ENCODE measurements at regions of chr12 and their contacts with region 1.

Region 1: DNA sequence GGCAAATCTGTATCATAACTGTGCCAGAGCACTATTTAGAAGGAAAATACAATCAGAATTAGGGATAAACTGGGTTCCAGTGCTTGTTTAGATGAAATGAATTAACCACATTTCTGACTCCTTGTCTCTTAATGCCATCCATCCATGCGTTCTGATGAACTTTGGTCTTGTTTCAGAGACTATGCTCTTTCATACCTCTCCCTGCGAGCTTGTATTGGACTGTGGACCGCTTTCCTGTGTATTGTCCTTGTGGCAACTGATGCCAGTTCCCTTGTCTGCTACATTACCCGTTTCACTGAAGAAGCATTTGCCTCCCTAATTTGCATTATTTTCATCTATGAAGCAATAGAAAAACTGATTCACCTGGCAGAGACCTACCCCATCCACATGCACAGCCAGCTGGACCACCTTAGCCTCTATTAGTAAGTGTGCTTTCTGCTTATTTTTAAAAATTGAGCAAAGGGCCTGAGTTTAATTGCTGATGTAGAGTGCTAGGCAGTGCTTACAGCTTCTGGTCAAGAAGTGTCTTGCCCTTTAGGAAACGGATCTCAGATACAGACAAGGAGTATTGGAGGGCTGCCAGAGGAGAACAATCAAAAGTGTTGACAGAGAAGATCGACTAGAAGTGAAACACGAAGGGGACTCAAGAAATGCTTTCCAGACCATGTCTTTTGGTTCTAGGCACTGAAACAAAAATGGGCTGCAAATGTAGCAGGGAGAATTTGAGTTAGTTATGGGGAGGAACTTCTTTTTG is 46.7 kb downstream of the SLC4A8 start:
- DNase-seq: no peak
- H3K4me3 ChIP-seq: no peak overlapping the region
- H3K27ac ChIP-seq: no peak overlapping the region
- H3K4me1 ChIP-seq: no peaks in the 10 kb centered on the region
- H3K27me3 ChIP-seq: peaks cover 7% of the 10 kb centered on the region
- CTCF ChIP-seq: no peak

Region 2: DNA sequence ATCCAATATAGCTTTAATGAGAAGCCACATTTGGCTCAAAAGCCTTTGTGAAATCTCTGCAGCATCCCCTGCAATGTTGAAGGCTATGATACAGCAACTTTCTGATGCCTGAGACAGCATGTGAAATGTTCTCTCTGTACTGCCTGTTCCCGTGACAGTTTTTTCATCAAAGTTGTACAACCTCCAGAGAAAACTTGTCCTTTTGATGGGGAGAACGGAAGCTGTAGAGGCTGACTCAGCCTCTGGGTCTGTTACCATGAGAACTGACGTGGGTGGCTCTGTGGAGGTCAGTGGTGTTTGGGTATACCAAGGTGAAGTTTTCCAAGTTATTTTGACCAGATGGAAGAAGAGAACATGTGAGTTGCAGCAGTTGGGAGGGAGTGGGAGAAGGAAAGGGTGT is 29.7 kb before region 1 on chr12:
- CTCF ChIA-PET with region 1: no interaction called
- dilution Hi-C with region 1: no loop called
- in situ Hi-C with region 1: no loop called
- intact Hi-C with region 1: no loop called
- DNase-seq: peak; percentile 47
- H3K4me3 ChIP-seq: no peak overlapping the region
- H3K27ac ChIP-seq: no peak overlapping the region
- H3K4me1 ChIP-seq: peaks cover 10% of the 10 kb centered on the region
- H3K27me3 ChIP-seq: peaks cover 3% of the 10 kb centered on the region
- CTCF ChIP-seq: no peak

Region 3: GRCh38 chr12:51496895-51497294 is 25.6 kb after region 1 on chr12:
- CTCF ChIA-PET with region 1: no interaction called
- dilution Hi-C with region 1: no loop called
- in situ Hi-C with region 1: no loop called
- intact Hi-C with region 1: loop called (anchors 1 kb)
- DNase-seq: no peak
- H3K4me3 ChIP-seq: no peak overlapping the region
- H3K27ac ChIP-seq: no peak overlapping the region
- H3K4me1 ChIP-seq: no peaks in the 10 kb centered on the region
- H3K27me3 ChIP-seq: no peaks in the 10 kb centered on the region
- CTCF ChIP-seq: no peak